ENCODE measurements at regions of chr2 and their contacts with region 1.

Region 1: DNA sequence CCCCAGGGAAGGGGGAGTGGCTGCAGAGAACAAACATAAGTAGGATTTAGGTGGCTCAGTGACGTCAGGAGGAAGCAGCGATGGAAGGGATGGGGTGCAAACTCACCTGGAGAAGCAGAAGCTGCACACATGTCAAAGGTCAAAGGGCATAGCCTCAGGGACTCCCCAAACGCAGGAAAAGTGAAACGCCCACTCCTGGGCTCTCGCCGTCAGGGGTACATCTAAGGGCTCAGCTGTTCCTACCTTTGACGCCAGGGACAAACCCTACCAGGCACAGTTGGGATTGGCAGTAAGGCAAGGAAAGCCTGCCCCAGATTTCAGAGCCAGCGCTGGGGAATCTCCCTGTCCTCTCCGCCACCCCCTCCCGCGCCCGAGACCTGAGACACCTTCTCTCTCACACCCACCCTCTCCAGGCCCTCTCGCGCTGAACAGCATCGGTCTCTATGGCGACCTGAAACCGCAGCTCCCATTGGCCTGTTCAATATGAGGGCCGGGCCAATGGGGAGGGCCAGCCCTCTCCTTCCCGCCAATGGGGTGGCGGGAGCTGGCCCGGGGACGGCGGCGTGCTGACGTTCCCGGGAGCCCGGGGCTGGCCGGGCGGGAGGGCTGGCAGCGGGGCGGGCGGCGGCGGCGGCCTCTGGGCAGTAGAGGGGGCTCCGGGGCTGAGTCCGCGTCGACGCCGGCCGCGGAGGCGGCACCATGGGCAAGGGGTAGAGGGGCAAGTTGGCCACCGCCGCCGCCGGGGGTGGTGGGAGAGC is at the starts of genes CCDC148 and PKP4:
- DNase-seq: peak; percentile 70 to 94 (median 87)
- ATAC-seq: peak; percentile 95
- H3K4me3 ChIP-seq: peak within 1 kb of the TSS; percentile 79
- H3K4me3 Mint-ChIP-seq: peak within 1 kb of the TSS; percentile 88 to 97 (median 94)
- H3K27ac ChIP-seq: peak within 1 kb of the TSS; percentile 70
- H3K27ac Mint-ChIP-seq: peak within 1 kb of the TSS; percentile 70 to 89 (median 82)
- H3K4me1 ChIP-seq: peaks cover 0 to 11% of the 10 kb centered on the region in 2 donors
- H3K4me1 Mint-ChIP-seq: peaks cover 13 to 27% (median 22%) of the 10 kb centered on the region in 7 donors
- H3K27me3 ChIP-seq: no peaks in the 10 kb centered on the region
- H3K27me3 Mint-ChIP-seq: peaks cover 0 to 52% (median 6%) of the 10 kb centered on the region in 5 donors
- total RNA-seq, gene CCDC148: 0.54 TPM in 1 of 5 experiments, not detected in the others
- total RNA-seq, gene PKP4: 15.1 to 33.2 (median 23.2) TPM

Region 2: GRCh38 chr2:157336137-157337010 is 1120.1 kb before region 1 on chr2:
- CTCF ChIA-PET with region 1: no interaction called
- POLR2A ChIA-PET with region 1: no interaction called
- intact Hi-C with region 1: loop called in 1 of 2 experiments (anchors 10 kb)
- DNase-seq: peak in 7 of 9 donors; percentile 19 to 59 (median 53)
- ATAC-seq: peak; percentile 52
- H3K4me3 ChIP-seq: peak overlapping the region; percentile 5
- H3K4me3 Mint-ChIP-seq: peak overlapping the region; percentile 5 to 86 (median 70)
- H3K27ac ChIP-seq: peak overlapping the region; percentile 15
- H3K27ac Mint-ChIP-seq: peak overlapping the region; percentile 15 to 92 (median 81)
- H3K4me1 ChIP-seq: peaks cover 23 to 58% of the 10 kb centered on the region in 2 donors
- H3K4me1 Mint-ChIP-seq: peaks cover 28 to 90% (median 83%) of the 10 kb centered on the region in 7 donors
- H3K27me3 ChIP-seq: no peaks in the 10 kb centered on the region
- H3K27me3 Mint-ChIP-seq: no peaks in the 10 kb centered on the region

Region 3: DNA sequence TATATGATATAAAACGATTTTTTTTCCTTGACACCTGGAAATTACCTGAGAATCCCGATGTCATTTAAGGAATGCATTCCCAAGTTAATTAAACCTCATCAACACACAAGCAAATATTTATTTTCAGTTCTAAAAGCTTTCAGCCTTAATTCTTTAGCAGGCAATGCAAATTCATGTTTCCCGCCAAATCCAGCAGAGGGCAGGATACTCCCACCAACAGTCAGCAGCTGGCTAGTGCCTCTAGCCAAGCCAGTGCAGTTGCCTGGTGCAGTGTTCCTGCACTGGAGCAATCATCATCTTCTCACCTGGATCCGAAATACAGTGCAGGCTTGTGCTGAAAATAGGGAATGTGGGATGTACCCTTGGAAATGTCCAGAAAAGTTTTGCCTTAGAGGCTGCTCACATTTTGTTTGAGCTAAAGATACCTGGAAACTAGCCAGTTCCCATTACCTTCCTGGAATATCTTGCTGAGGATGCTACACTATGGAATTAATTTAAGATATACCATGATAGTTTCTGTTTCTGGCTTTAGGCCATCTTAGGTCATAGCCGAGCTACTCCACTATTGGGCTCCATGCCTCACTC is 964.2 kb before region 1 on chr2:
- CTCF ChIA-PET with region 1: no interaction called
- POLR2A ChIA-PET with region 1: no interaction called
- intact Hi-C with region 1: loop called in 1 of 2 experiments (anchors 10 kb)
- DNase-seq: peak; percentile 41 to 79 (median 68)
- ATAC-seq: peak; percentile 91
- H3K4me3 ChIP-seq: no peak overlapping the region
- H3K4me3 Mint-ChIP-seq: peak overlapping the region in 6 of 10 donors; percentile 1 to 39 (median 14)
- H3K27ac ChIP-seq: no peak overlapping the region
- H3K27ac Mint-ChIP-seq: peak overlapping the region in 3 of 9 donors; percentile 9 to 19 (median 13)
- H3K4me1 ChIP-seq: peaks cover 0 to 21% of the 10 kb centered on the region in 2 donors
- H3K4me1 Mint-ChIP-seq: peaks cover 10 to 67% (median 59%) of the 10 kb centered on the region in 7 donors
- H3K27me3 ChIP-seq: no peaks in the 10 kb centered on the region
- H3K27me3 Mint-ChIP-seq: no peaks in the 10 kb centered on the region

Region 4: GRCh38 chr2:157898591-157898996 is 557.9 kb before region 1 on chr2:
- CTCF ChIA-PET with region 1: no interaction called
- POLR2A ChIA-PET with region 1: no interaction called
- intact Hi-C with region 1: loop called (anchors 1 to 2 kb)
- DNase-seq: peak in 2 of 9 donors; percentile 54 to 60
- ATAC-seq: peak; percentile 63
- H3K4me3 ChIP-seq: peak overlapping the region; percentile 26
- H3K4me3 Mint-ChIP-seq: peak overlapping the region; percentile 74 to 93 (median 86)
- H3K27ac ChIP-seq: peak overlapping the region; percentile 78
- H3K27ac Mint-ChIP-seq: peak overlapping the region; percentile 94 to 100 (median 98)
- H3K4me1 ChIP-seq: peaks cover 44 to 59% of the 10 kb centered on the region in 2 donors
- H3K4me1 Mint-ChIP-seq: peaks cover 48 to 80% (median 72%) of the 10 kb centered on the region in 7 donors
- H3K27me3 ChIP-seq: no peaks in the 10 kb centered on the region
- H3K27me3 Mint-ChIP-seq: no peaks in the 10 kb centered on the region

Region 5: DNA sequence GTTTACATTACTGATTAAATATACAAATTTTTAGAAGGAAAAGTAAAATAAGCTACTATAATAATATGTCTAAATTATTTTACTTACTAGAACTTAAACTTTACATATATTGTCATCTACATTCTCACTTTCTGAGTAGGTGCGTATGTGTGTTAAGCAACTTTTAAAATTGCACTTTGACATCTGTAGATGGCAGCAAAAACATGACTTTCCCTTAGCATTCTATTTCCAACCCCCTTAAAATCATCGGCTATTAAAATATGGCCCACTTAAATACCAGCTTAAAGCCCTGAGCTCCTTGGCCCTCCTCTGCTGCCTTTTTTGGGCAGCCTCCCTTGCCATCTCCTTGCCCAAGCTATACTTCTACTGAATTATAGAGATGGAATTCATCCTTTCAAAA is 276.8 kb before region 1 on chr2:
- CTCF ChIA-PET with region 1: no interaction called
- POLR2A ChIA-PET with region 1: interaction called, 3 read pairs
- intact Hi-C with region 1: loop called in 1 of 2 experiments (anchors 10 kb)
- DNase-seq: no peak
- ATAC-seq: no peak
- H3K4me3 ChIP-seq: no peak overlapping the region
- H3K4me3 Mint-ChIP-seq: no peak overlapping the region
- H3K27ac ChIP-seq: no peak overlapping the region
- H3K27ac Mint-ChIP-seq: no peak overlapping the region
- H3K4me1 ChIP-seq: no peaks in the 10 kb centered on the region
- H3K4me1 Mint-ChIP-seq: peaks cover 0 to 2% (median 0%) of the 10 kb centered on the region in 7 donors
- H3K27me3 ChIP-seq: peaks cover 0 to 5% of the 10 kb centered on the region in 2 donors
- H3K27me3 Mint-ChIP-seq: peaks cover 39 to 49% (median 47%) of the 10 kb centered on the region in 5 donors

Region 6: DNA sequence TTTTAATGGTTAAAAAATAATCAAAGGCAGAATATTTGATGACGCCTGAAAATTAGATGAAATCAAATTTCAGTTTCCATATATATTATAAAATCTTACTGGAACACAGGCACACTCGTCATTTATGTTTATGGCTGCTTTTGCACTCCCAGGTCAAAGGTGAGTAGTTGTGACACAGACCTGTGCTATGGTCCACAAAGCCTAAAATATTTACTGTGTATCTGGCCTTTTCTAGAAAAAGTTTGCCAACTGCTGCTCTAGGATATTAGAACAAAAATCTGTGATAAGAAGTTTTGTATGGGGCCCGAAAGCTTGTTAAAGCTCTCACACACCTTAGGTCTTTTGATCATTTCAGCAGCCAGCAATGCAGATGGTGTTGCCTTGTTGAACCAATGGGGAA is 104.6 kb after region 1 on chr2:
- CTCF ChIA-PET with region 1: no interaction called
- POLR2A ChIA-PET with region 1: no interaction called
- intact Hi-C with region 1: no loop called
- DNase-seq: no peak
- ATAC-seq: no peak
- H3K4me3 ChIP-seq: no peak overlapping the region
- H3K4me3 Mint-ChIP-seq: no peak overlapping the region
- H3K27ac ChIP-seq: no peak overlapping the region
- H3K27ac Mint-ChIP-seq: no peak overlapping the region
- H3K4me1 ChIP-seq: no peaks in the 10 kb centered on the region
- H3K4me1 Mint-ChIP-seq: peaks cover 0 to 2% (median 0%) of the 10 kb centered on the region in 7 donors
- H3K27me3 ChIP-seq: no peaks in the 10 kb centered on the region
- H3K27me3 Mint-ChIP-seq: no peaks in the 10 kb centered on the region

Region 7: GRCh38 chr2:158624961-158625360 is 168.5 kb after region 1 on chr2:
- CTCF ChIA-PET with region 1: no interaction called
- POLR2A ChIA-PET with region 1: no interaction called
- intact Hi-C with region 1: loop called in 1 of 2 experiments (anchors 5 kb)
- DNase-seq: no peak
- ATAC-seq: no peak
- H3K4me3 ChIP-seq: no peak overlapping the region
- H3K4me3 Mint-ChIP-seq: no peak overlapping the region
- H3K27ac ChIP-seq: no peak overlapping the region
- H3K27ac Mint-ChIP-seq: no peak overlapping the region
- H3K4me1 ChIP-seq: no peaks in the 10 kb centered on the region
- H3K4me1 Mint-ChIP-seq: no peaks in the 10 kb centered on the region
- H3K27me3 ChIP-seq: no peaks in the 10 kb centered on the region
- H3K27me3 Mint-ChIP-seq: no peaks in the 10 kb centered on the region

Region 8: GRCh38 chr2:159286709-159287441 is 830.4 kb after region 1 on chr2:
- CTCF ChIA-PET with region 1: no interaction called
- POLR2A ChIA-PET with region 1: no interaction called
- intact Hi-C with region 1: loop called (anchors 1 to 2 kb)
- DNase-seq: peak; percentile 89 to 97 (median 94)
- ATAC-seq: peak; percentile 99
- H3K4me3 ChIP-seq: peak overlapping the region; percentile 72
- H3K4me3 Mint-ChIP-seq: peak overlapping the region; percentile 80 to 92 (median 89)
- H3K27ac ChIP-seq: peak overlapping the region; percentile 77
- H3K27ac Mint-ChIP-seq: peak overlapping the region; percentile 64 to 97 (median 85)
- H3K4me1 ChIP-seq: peaks cover 8 to 13% of the 10 kb centered on the region in 2 donors
- H3K4me1 Mint-ChIP-seq: peaks cover 15 to 36% (median 31%) of the 10 kb centered on the region in 7 donors
- H3K27me3 ChIP-seq: no peaks in the 10 kb centered on the region
- H3K27me3 Mint-ChIP-seq: no peaks in the 10 kb centered on the region

Measured in naive thymus-derived CD4-positive, alpha-beta T cell (primary cell).